ENCODE measurements at regions of chr3 and their contacts with region 1.

Region 1: GRCh38 chr3:138082085-138082991 is 33.1 kb downstream of the DZIP1L start:
- DNase-seq: peak; percentile 49
- H3K4me3 Mint-ChIP-seq: peak overlapping the region; percentile 48
- H3K27ac Mint-ChIP-seq: peak overlapping the region; percentile 87
- H3K4me1 Mint-ChIP-seq: peaks cover 39% of the 10 kb centered on the region
- H3K27me3 Mint-ChIP-seq: peaks cover 43% of the 10 kb centered on the region

Region 2: GRCh38 chr3:138068579-138069174 is 13.7 kb before region 1 on chr3:
- CTCF ChIA-PET with region 1: interaction called, 10 read pairs
- DNase-seq: peak; percentile 86
- H3K4me3 Mint-ChIP-seq: no peak overlapping the region
- H3K27ac Mint-ChIP-seq: no peak overlapping the region
- H3K4me1 Mint-ChIP-seq: peaks cover 7% of the 10 kb centered on the region
- H3K27me3 Mint-ChIP-seq: peaks cover 49% of the 10 kb centered on the region

Measured in activated naive CD4-positive, alpha-beta T cell treated with anti-CD3 and anti-CD28 coated beads, Interleukin-2, amount 10 ng/mL, durations not matched to agents 7 days and 5 days (primary cell).